Endothelial cell of umbilical vein (primary cell): ENCODE measurements at regions of chr2 and their contacts with region 1.

Region 1: DNA sequence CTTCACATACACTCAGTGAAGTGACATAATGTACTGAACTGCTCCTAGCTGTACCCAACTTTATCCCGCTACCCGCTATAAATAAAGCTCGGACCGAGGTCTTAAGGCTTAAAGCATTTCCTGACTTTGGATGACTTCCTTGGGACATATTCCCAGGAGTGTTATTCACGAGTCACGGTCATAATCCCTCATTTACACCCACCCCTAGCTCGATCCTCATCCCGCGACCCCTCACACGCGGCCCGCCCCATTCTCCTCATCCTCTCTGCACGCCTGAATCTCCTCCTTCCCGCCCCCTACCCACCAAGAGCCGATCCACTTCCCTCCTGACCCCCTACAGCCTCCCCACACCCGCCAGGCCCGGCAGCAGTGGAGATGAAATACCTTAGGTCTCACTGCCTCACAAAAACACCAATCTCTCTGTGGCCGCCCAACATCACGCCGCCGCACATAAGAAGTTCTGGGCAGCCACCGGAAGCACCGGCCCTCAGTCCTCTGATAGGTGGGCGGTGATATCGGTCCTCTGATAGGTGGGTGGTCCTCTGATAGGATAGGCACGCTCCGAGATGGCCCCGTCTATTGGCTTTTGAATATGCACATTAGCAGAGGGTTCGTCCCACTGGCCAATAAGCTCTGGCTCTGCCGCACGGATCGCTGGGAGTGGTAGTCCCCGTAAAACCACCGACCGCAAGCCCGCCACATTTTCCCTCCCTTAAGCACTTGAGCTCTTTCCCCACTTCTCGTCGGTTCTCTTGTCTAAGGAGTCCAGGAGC is at the start of gene WDCP:
- DNase-seq: peak; percentile 99
- H3K4me3 ChIP-seq: peak within 1 kb of the TSS; percentile 89 to 95 (median 89)
- H3K27ac ChIP-seq: peak within 1 kb of the TSS; percentile 36
- H3K4me1 ChIP-seq: peaks cover 23% of the 10 kb centered on the region
- H3K27me3 ChIP-seq: no peaks in the 10 kb centered on the region
- CTCF ChIP-seq: no peak
- POLR2A ChIP-seq: peak; percentile 97
- total RNA-seq, gene WDCP: 15.4 and 15.9 TPM in 2 replicates

Region 2: DNA sequence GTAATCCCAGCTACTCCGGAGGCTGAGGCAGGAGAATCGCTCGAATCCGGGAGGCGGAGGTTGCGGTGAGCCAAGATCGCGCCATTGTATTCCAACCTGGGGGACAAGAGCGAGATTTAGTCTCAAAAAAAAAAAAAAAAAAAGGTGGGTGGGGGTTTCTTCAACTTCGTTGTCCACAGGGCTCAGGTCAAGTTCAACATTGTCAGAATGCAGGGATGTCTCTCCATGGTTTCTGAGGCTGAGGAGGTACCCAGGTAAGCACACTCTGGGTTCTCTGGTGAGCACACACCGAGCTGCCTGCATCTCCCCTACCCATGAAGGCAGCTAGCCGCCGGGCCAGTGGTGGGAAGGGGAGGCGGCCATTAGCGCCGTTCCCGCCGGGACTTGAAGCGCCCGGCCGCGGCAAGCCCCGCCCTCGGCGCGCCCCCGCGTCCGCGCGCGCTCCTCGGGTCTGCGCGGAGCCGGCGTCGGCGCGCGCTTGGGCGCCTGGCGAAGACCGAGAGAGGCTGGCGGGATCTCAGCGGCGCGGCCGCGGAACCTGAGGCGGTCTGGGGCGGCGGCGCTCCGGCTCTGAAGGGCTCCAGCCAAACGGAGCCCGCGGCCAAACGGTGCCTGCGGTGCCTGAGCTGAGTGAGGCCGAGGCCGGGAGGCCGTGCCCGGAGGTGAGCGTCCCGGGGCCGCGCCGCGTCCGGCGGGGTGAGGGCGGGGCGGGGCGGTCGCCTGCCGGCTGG is 107.0 kb before region 1 on chr2 and contains the start of gene UBXN2A:
- CTCF ChIA-PET with region 1: no interaction called
- POLR2A ChIA-PET with region 1: no interaction called
- dilution Hi-C with region 1: no loop called
- intact Hi-C with region 1: loop called (anchors 1 kb)
- DNase-seq: peak; percentile 80
- H3K4me3 ChIP-seq: peak within 1 kb of the TSS; percentile 50 to 92 (median 82)
- H3K27ac ChIP-seq: peak within 1 kb of the TSS; percentile 78
- H3K4me1 ChIP-seq: peaks cover 15% of the 10 kb centered on the region
- H3K27me3 ChIP-seq: no peaks in the 10 kb centered on the region
- CTCF ChIP-seq: no peak
- POLR2A ChIP-seq: peak; percentile 77
- total RNA-seq, gene UBXN2A: 16.8 and 19.0 TPM in 2 replicates

Region 3: GRCh38 chr2:24015562-24016346 is 31.4 kb before region 1 on chr2:
- CTCF ChIA-PET with region 1: interaction called, 3 read pairs
- POLR2A ChIA-PET with region 1: interaction called, 3 read pairs
- dilution Hi-C with region 1: no loop called
- intact Hi-C with region 1: loop called (anchors 1 kb)
- DNase-seq: peak; percentile 81
- H3K4me3 ChIP-seq: no peak overlapping the region
- H3K27ac ChIP-seq: peak overlapping the region; percentile 94
- H3K4me1 ChIP-seq: peaks cover 24% of the 10 kb centered on the region
- H3K27me3 ChIP-seq: no peaks in the 10 kb centered on the region
- CTCF ChIP-seq: no peak
- POLR2A ChIP-seq: peak; percentile 16

Region 4: GRCh38 chr2:24075915-24076848 is 29.1 kb after region 1 on chr2 and contains the start of gene SF3B6:
- CTCF ChIA-PET with region 1: interaction called, 6 read pairs
- POLR2A ChIA-PET with region 1: interaction called, 7 read pairs
- dilution Hi-C with region 1: no loop called
- intact Hi-C with region 1: loop called (anchors 1 kb)
- DNase-seq: peak; percentile 98
- H3K4me3 ChIP-seq: peak within 1 kb of the TSS; percentile 79 to 92 (median 87)
- H3K27ac ChIP-seq: peak within 1 kb of the TSS; percentile 18
- H3K4me1 ChIP-seq: peaks cover 12% of the 10 kb centered on the region
- H3K27me3 ChIP-seq: no peaks in the 10 kb centered on the region
- CTCF ChIP-seq: no peak
- POLR2A ChIP-seq: peak; percentile 79
- total RNA-seq, gene SF3B6: 105 and 108 TPM in 2 replicates